GM12878 (cell line): ENCODE measurements at regions of chr1 and their contacts with region 1.

Region 1: GRCh38 chr1:89615676-89616598 is 17.0 kb upstream of the LRRC8C start:
- DNase-seq: no peak
- ATAC-seq: peak; percentile 37
- H3K4me3 ChIP-seq: no peak overlapping the region
- H3K27ac ChIP-seq: no peak overlapping the region
- H3K4me1 ChIP-seq: peaks cover 14% of the 10 kb centered on the region
- H3K27me3 ChIP-seq: no peaks in the 10 kb centered on the region
- CTCF ChIP-seq: peak; percentile 15 to 52 (median 37); a peak in 4 of 6 replicates
- EP300 ChIP-seq: no peak
- POLR2A ChIP-seq: no peak
- RAD21 ChIP-seq: 0 out of 2 replicates have a peak, but pooled peaks have one; percentile 8

Region 2: GRCh38 chr1:89444791-89445190 is 171.1 kb before region 1 on chr1:
- CTCF ChIA-PET with region 1: no interaction called
- POLR2A ChIA-PET with region 1: no interaction called
- RAD21 ChIA-PET with region 1: no interaction called
- SMC1A ChIA-PET with region 1: no interaction called
- in situ Hi-C with region 1: no loop called
- intact Hi-C with region 1: no loop called
- DNase-seq: no peak
- ATAC-seq: no peak
- H3K4me3 ChIP-seq: no peak overlapping the region
- H3K27ac ChIP-seq: no peak overlapping the region
- H3K4me1 ChIP-seq: no peaks in the 10 kb centered on the region
- H3K27me3 ChIP-seq: no peaks in the 10 kb centered on the region; a peak in 1 of 4 replicates
- CTCF ChIP-seq: no peak
- EP300 ChIP-seq: no peak
- POLR2A ChIP-seq: no peak
- RAD21 ChIP-seq: no peak

Region 3: DNA sequence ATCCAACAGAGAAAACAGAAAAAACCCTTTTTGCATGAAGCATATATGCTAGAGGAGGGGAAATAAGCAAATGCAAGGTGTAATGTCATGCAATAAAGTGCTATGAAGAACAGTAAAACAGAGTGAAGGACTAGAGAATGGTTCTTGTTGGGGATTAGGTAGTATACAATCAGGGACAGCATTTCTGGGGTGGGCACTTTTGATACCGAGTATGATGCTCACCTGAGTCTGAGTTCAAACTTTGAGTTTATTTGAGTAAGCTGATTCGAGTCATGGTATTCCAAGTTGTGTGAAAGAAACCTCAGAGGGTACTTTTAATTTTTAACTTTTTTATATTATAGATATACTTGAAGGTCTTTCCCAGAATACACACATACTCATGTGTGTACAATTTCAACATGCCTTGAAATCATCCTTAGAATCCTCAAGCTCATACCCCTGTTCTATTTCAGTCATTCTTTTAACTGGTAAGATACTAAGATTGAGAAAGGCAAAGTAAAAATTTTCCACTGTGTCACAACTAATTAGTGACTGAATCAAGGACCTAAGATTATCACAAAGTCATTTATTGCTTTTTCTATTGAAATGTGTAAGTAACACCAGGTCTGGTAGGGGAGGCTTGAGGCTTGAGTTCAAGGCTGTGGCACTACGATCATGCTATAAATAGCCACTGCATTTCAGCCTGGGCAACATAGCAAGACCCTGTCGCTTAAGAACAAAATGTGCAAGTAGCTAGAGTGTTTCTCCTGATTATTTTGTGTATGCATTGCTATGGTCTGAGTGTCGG is 79.2 kb before region 1 on chr1:
- CTCF ChIA-PET with region 1: no interaction called
- POLR2A ChIA-PET with region 1: no interaction called
- RAD21 ChIA-PET with region 1: no interaction called
- SMC1A ChIA-PET with region 1: no interaction called
- in situ Hi-C with region 1: no loop called
- intact Hi-C with region 1: no loop called
- DNase-seq: no peak
- ATAC-seq: no peak; the same call in 1 of the 3 replicates
- H3K4me3 ChIP-seq: no peak overlapping the region
- H3K27ac ChIP-seq: no peak overlapping the region
- H3K4me1 ChIP-seq: no peaks in the 10 kb centered on the region
- H3K27me3 ChIP-seq: no peaks in the 10 kb centered on the region
- CTCF ChIP-seq: no peak
- EP300 ChIP-seq: no peak
- POLR2A ChIP-seq: no peak
- RAD21 ChIP-seq: no peak

Region 4: GRCh38 chr1:89598450-89599331 is 17.2 kb before region 1 on chr1:
- CTCF ChIA-PET with region 1: interaction called, 20 read pairs
- POLR2A ChIA-PET with region 1: interaction called, 5 read pairs
- RAD21 ChIA-PET with region 1: interaction called, 16 read pairs
- SMC1A ChIA-PET with region 1: interaction called, 30 read pairs
- in situ Hi-C with region 1: no loop called
- intact Hi-C with region 1: no loop called
- DNase-seq: no peak
- ATAC-seq: peak; percentile 88
- H3K4me3 ChIP-seq: no peak overlapping the region
- H3K27ac ChIP-seq: no peak overlapping the region
- H3K4me1 ChIP-seq: peaks cover 9% of the 10 kb centered on the region
- H3K27me3 ChIP-seq: no peaks in the 10 kb centered on the region
- CTCF ChIP-seq: peak; percentile 53 to 62 (median 56)
- EP300 ChIP-seq: no peak
- POLR2A ChIP-seq: no peak
- RAD21 ChIP-seq: peak; percentile 67

Region 5: GRCh38 chr1:89605692-89606091 is 10.2 kb before region 1 on chr1:
- CTCF ChIA-PET with region 1: interaction called, 20 read pairs
- POLR2A ChIA-PET with region 1: interaction called, 3 read pairs
- RAD21 ChIA-PET with region 1: interaction called, 16 read pairs
- SMC1A ChIA-PET with region 1: interaction called, 30 read pairs
- in situ Hi-C with region 1: no loop called
- intact Hi-C with region 1: no loop called
- DNase-seq: no peak
- ATAC-seq: no peak
- H3K4me3 ChIP-seq: no peak overlapping the region
- H3K27ac ChIP-seq: no peak overlapping the region
- H3K4me1 ChIP-seq: peaks cover 14% of the 10 kb centered on the region
- H3K27me3 ChIP-seq: no peaks in the 10 kb centered on the region; a peak in 1 of 4 replicates
- CTCF ChIP-seq: no peak
- EP300 ChIP-seq: no peak
- POLR2A ChIP-seq: no peak
- RAD21 ChIP-seq: no peak

Region 6: DNA sequence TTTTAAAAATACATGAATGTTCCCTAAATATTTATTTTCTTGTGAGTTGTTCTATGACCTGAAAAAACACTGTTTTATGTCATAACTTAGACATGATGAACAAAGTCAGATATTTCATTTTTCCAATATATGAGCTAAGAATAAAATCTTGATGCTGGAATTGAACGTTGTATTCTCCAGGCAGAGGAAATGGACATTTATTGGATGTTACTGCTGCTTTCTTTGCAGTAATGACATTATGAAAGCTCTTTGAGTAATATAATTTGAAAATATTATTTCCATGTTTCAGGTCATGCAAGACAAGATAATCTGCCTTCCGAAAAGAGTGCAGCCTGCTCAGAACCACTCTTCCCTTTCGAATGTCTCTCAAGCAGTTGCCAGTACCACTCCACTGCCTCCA is 96.5 kb after region 1 on chr1:
- CTCF ChIA-PET with region 1: no interaction called
- POLR2A ChIA-PET with region 1: no interaction called
- RAD21 ChIA-PET with region 1: no interaction called
- SMC1A ChIA-PET with region 1: no interaction called
- in situ Hi-C with region 1: no loop called
- intact Hi-C with region 1: no loop called
- DNase-seq: no peak
- ATAC-seq: no peak
- H3K4me3 ChIP-seq: no peak overlapping the region
- H3K27ac ChIP-seq: no peak overlapping the region
- H3K4me1 ChIP-seq: peaks cover 1% of the 10 kb centered on the region
- H3K27me3 ChIP-seq: no peaks in the 10 kb centered on the region
- CTCF ChIP-seq: no peak
- EP300 ChIP-seq: no peak
- POLR2A ChIP-seq: no peak
- RAD21 ChIP-seq: no peak